ENCODE measurements at regions of chr9 and their contacts with region 1.

Region 1: GRCh38 chr9:93962561-93963440 is 7.6 kb upstream of the BARX1 start:
- DNase-seq: peak; percentile 93

Region 2: DNA sequence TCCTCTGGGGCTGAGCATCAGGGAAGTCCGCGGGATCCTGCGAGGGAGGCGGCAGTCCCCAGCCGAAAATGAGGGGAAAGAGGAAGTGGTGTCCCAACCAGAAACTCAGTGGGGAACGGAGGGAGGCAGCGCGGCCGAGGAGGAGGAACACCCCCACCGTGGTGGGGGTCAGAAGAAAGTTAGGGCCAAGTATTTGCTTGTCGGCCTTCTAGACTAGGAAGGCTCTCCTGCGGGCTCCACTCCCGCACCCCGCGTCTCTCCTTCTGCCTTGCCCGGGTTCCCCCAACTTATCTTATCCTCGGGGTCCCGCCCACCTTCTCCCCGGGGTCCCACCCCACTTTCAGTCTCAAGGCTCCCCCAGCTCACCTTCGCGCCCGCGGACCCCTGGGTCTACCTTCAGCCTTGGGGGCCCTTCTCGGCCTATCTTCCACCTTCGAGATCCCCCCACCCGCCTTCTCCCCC is 387.0 kb before region 1 on chr9:
- intact Hi-C with region 1: loop called in 1 of 2 experiments (anchors 10 kb)
- DNase-seq: peak; percentile 90

Region 3: DNA sequence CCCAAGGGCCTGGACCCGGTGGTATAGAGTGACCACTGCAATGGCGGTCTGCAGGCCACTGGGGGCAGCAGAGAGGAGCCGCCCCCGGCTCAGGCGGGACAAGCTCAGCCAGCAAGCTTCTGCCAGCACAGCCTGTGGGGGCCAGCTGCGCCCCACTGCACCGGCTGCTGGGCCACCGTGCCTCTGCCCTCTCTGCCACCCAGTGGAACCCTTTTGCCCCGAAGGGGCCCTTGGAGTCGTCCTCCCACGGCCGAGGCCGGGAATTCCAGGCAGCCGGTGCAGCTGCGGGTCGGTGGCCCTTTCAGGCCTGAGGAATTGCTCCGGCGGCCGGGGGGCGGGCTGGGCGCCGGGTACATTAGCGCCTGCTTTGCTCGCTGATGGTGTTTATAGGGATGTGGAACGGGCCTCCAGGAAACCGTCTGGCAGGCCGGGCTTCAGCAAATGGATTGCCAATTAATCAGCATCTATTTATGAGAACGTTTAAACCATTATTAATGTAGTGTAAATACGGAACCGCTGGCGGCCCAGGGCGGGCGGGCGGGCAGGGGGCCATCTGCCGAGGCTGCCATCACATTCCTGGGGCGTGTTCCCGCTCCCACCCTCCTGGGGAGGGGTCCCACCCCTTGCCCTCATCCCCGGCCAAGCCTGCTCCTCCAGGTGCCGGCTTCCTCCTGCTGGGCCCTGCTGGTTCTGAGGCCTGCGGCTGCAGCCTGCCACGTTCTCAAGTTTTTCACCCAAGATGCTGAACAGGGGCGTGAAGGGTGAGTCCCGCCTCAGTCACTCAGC is 135.1 kb before region 1 on chr9:
- intact Hi-C with region 1: loop called in 1 of 2 experiments (anchors 10 kb)
- DNase-seq: no peak

Region 4: DNA sequence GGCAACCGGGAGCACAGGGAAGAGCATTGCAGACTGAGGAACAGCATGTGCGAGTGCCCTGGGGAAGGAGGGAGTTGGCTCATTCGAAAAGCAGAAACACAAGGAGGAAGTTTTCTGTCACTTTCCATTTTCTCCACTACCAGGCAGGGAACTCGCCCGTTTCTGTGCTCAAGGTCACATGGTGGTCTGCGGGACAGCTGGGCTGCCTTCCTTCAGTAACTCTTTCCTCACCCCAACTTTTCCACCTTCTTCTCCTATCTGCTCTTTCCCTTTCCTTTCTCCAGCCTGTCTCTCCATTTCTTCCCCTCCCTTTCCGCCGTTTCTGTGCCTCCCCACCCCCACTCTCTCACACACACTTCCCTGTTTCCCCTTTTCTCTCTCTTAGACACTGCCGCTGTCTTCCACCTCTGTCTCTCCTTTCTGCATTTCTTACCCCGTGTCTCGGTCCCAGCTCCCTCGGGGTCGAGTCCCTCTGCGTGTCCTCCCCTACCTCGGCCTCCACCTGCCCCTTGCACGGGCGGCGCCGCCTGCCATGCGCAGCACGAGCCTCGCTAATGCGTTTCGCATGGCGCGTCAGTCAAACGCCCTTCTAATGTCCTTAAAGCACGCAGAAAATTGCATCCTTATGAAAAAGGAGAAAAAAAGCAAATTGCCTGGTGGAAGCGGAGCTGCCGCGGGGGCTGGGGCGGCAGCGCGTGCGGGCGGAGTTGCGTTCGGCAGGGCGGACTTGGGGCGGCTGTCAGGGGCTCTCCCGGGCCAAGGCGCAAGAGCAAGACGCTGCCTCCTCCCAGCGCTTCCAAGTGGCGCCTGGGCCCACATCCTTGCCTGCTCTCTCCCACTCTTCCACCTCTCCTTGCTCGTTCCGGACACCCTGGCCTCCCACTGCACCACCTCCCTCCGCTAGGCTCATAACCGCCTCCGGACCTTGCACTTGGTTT is 17.1 kb before region 1 on chr9:
- intact Hi-C with region 1: no loop called
- DNase-seq: no peak